Panc1 (cell line): ENCODE measurements at regions of chr19 and their contacts with region 1.

Region 1: GRCh38 chr19:43950834-43951645 is at the start of gene ZNF221:
- DNase-seq: peak; percentile 81
- ATAC-seq: peak; percentile 100
- H3K4me3 ChIP-seq: peak within 1 kb of the TSS; percentile 68 to 79
- H3K27ac ChIP-seq: peak within 1 kb of the TSS; percentile 91
- H3K4me1 ChIP-seq: no peaks in the 10 kb centered on the region
- H3K27me3 ChIP-seq: no peaks in the 10 kb centered on the region
- CTCF ChIP-seq: peak; percentile 50
- total RNA-seq, gene ZNF221: 2.8 TPM

Region 2: GRCh38 chr19:43983912-43984686 is 33.1 kb after region 1 on chr19 and contains the start of gene ZNF155:
- CTCF ChIA-PET with region 1: no interaction called
- POLR2A ChIA-PET with region 1: interaction called, 16 read pairs
- in situ Hi-C with region 1: no loop called
- intact Hi-C with region 1: no loop called
- DNase-seq: peak; percentile 78
- ATAC-seq: peak; percentile 100
- H3K4me3 ChIP-seq: peak within 1 kb of the TSS; percentile 65 to 82
- H3K27ac ChIP-seq: peak within 1 kb of the TSS; percentile 78
- H3K4me1 ChIP-seq: no peaks in the 10 kb centered on the region
- H3K27me3 ChIP-seq: no peaks in the 10 kb centered on the region
- CTCF ChIP-seq: no peak
- total RNA-seq, gene ZNF155: 5.0 TPM

Region 3: GRCh38 chr19:44202470-44202869 is 251.4 kb after region 1 on chr19:
- CTCF ChIA-PET with region 1: no interaction called
- POLR2A ChIA-PET with region 1: no interaction called
- in situ Hi-C with region 1: no loop called
- intact Hi-C with region 1: no loop called
- DNase-seq: no peak
- ATAC-seq: no peak
- H3K4me3 ChIP-seq: no peak overlapping the region
- H3K27ac ChIP-seq: no peak overlapping the region
- H3K4me1 ChIP-seq: no peaks in the 10 kb centered on the region
- H3K27me3 ChIP-seq: no peaks in the 10 kb centered on the region
- CTCF ChIP-seq: no peak